ENCODE measurements at regions of chr7 and their contacts with region 1.

Region 1: DNA sequence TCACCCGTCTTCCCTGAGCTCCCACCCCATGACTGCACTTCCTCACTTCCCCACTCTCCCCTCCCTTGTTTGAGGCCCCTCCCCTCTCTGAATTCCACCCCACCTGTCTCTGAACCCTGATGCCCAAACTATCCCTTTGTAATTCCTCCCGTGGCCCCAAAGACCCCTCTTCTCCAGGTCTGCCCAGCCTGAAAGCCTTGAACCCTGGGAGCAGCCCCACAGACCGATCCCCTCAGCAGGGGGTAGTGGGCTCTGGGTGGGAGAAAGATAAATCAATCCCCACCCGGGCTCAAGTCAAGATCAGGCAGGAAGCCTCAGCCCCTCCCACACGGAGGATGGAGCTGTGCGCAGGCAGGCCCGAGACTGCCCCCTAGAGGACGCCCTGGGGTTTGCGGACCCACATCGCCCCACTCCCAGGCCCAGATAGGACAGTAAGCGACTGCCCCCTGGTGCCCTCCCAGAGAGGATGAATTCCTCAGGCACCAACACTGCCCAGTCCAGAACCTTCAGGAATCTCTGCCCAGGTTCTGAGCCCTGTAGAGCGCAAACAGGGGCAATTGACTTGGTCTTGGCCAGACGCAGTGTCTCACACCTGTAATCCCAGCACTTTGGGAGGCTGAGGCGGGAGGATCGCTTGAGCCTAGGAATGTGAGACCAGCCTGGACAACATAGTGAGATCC is 11.7 kb downstream of the HSPB1 start:
- DNase-seq: peak; percentile 90 to 97 (median 93)
- ATAC-seq: peak; percentile 85
- H3K4me3 ChIP-seq: no peak overlapping the region
- H3K4me3 Mint-ChIP-seq: peak overlapping the region in 4 of 10 donors; percentile 33 to 70 (median 60)
- H3K27ac ChIP-seq: no peak overlapping the region
- H3K27ac Mint-ChIP-seq: peak overlapping the region in 3 of 9 donors; percentile 8 to 86 (median 64)
- H3K4me1 ChIP-seq: peaks cover 11 to 12% of the 10 kb centered on the region in 2 donors
- H3K4me1 Mint-ChIP-seq: peaks cover 13 to 27% (median 23%) of the 10 kb centered on the region in 7 donors
- H3K27me3 ChIP-seq: no peaks in the 10 kb centered on the region
- H3K27me3 Mint-ChIP-seq: no peaks in the 10 kb centered on the region

Region 2: GRCh38 chr7:75914730-75915585 is 399.2 kb before region 1 on chr7 and contains the start of gene POR:
- CTCF ChIA-PET with region 1: no interaction called
- POLR2A ChIA-PET with region 1: no interaction called
- intact Hi-C with region 1: loop called (anchors 10 kb)
- DNase-seq: peak; percentile 93 to 100 (median 99)
- ATAC-seq: peak; percentile 99
- H3K4me3 ChIP-seq: peak within 1 kb of the TSS; percentile 79
- H3K4me3 Mint-ChIP-seq: peak within 1 kb of the TSS; percentile 91 to 94 (median 92)
- H3K27ac ChIP-seq: peak within 1 kb of the TSS; percentile 100
- H3K27ac Mint-ChIP-seq: peak within 1 kb of the TSS; percentile 94 to 99 (median 98)
- H3K4me1 ChIP-seq: peaks cover 12 to 19% of the 10 kb centered on the region in 2 donors
- H3K4me1 Mint-ChIP-seq: peaks cover 18 to 50% (median 35%) of the 10 kb centered on the region in 7 donors
- H3K27me3 ChIP-seq: no peaks in the 10 kb centered on the region
- H3K27me3 Mint-ChIP-seq: peaks cover 0 to 3% (median 0%) of the 10 kb centered on the region in 5 donors
- total RNA-seq, gene POR: 45.9 to 72.3 (median 69.7) TPM

Region 3: DNA sequence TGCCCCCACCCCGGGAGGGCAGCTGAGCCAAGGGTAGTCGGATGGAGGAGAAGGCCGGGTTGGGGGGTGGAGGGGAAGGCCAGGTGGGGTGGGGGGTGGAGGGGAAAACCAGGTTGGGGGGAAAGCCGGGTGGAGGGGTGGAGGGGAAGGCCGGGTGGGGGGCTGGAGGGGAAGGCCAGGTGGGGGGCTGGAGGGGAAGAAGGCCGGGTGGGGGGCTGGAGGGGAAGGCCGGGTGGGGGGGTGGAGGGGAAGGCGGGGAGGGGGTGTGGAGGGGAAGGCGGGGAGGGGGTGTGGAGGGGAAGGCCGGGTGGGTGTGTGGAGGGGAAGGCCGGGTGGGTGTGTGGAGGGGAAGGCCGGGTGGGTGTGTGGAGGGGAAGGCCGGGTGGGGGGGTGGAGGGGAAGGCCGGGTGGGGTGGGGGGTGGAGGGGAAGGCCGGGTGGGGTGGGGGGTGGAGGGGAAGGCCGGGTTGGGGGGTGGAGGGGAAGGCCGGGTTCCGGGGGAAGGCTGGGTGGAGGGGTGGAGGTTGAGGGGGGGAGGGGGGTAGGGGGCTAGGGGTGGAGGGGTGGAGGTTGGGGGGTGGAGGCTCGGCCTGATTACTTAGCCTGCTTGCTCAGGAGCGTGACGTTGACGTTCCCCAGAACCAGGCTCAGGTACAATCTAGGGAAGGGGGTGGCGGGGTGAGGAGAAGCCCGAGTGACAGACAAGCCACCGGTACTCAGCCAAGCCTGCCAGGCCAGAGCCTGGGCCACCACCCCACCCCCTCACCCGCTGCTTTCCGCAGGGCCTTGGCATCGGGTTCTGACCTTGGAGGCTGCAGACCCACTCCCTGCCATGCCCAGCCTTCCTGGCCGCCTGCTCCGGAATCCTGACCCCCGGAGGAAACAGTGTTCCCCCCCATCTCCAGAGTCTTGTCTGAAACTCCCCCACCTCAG is 325.3 kb before region 1 on chr7:
- CTCF ChIA-PET with region 1: no interaction called
- POLR2A ChIA-PET with region 1: no interaction called
- intact Hi-C with region 1: no loop called
- DNase-seq: no peak
- ATAC-seq: no peak
- H3K4me3 ChIP-seq: no peak overlapping the region
- H3K4me3 Mint-ChIP-seq: no peak overlapping the region
- H3K27ac ChIP-seq: no peak overlapping the region
- H3K27ac Mint-ChIP-seq: peak overlapping the region in 1 of 9 donors; percentile 3
- H3K4me1 ChIP-seq: peaks cover 0 to 4% of the 10 kb centered on the region in 2 donors
- H3K4me1 Mint-ChIP-seq: peaks cover 11 to 27% (median 16%) of the 10 kb centered on the region in 7 donors
- H3K27me3 ChIP-seq: no peaks in the 10 kb centered on the region
- H3K27me3 Mint-ChIP-seq: no peaks in the 10 kb centered on the region

Region 4: DNA sequence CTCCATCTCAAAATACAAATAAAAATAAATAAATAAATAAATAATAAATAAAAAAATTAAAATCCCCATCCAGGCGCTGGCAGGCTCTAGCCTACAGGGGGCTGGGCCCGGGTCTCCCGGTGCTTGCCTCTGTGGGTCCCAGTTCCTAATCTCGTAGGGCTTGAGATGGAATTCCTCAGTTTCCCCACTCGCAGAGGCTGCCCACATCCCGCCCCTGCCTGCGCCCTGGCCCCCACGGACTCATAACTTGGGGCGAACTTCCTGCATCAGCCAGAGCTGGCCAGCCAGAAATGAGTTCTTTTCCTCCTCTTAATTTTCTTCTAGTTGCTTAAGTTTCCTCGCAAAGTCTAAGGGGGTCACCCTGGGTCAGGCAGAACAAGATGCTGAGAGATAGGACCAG is 134.5 kb before region 1 on chr7:
- CTCF ChIA-PET with region 1: interaction called, 45 read pairs
- POLR2A ChIA-PET with region 1: interaction called, 10 read pairs
- intact Hi-C with region 1: loop called (anchors 1 kb)
- DNase-seq: no peak
- ATAC-seq: no peak
- H3K4me3 ChIP-seq: no peak overlapping the region
- H3K4me3 Mint-ChIP-seq: no peak overlapping the region
- H3K27ac ChIP-seq: no peak overlapping the region
- H3K27ac Mint-ChIP-seq: no peak overlapping the region
- H3K4me1 ChIP-seq: no peaks in the 10 kb centered on the region
- H3K4me1 Mint-ChIP-seq: peaks cover 2 to 7% (median 4%) of the 10 kb centered on the region in 7 donors
- H3K27me3 ChIP-seq: no peaks in the 10 kb centered on the region
- H3K27me3 Mint-ChIP-seq: peaks cover 0 to 2% (median 0%) of the 10 kb centered on the region in 5 donors

Region 5: DNA sequence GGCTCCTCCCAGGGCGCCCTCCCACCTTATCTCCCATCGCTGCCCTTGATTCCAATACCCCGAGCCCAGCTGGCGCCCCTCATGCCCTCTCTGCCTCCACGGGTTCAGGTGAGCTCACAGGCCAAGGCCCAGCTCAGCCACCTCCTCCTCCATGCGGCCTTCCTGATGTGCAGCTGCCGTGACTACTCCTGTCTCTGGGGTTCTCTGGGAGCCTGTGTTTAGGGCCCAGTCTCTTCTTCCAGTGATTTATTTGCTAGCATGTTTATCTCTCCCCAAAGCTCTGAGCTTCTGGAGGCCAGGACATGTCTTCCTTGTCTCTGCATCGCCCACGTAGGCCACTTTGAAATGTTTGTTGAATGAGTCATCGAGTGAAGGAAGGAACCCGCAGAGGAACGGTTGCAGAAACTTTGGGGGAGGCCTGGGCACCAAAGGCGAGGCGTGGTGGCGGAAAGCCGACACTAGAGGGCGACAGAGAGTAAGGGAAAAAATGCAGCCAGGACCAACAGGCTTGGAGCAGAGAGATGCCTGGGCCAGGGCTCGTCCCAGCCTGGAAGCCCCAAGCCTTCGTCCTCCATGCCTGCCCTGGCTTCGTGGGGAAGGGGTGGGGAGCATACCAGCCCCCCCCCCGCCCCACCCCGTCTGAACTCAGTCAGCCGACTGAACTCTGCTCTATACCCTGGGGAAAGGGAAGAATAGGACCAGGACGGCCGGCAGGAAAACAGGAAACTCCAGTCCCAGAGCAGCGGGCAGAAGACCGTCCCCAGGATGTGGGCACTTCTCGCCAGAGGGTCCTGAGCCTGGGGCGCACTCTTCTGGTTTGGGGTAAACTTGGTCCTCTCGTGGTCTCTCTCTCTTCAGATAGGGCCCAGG is 22.6 kb before region 1 on chr7:
- CTCF ChIA-PET with region 1: interaction called, 79 read pairs
- POLR2A ChIA-PET with region 1: interaction called, 8 read pairs
- intact Hi-C with region 1: loop called (anchors 1 kb)
- DNase-seq: peak; percentile 59 to 93 (median 75)
- ATAC-seq: peak; percentile 89
- H3K4me3 ChIP-seq: no peak overlapping the region
- H3K4me3 Mint-ChIP-seq: peak overlapping the region in 1 of 10 donors; percentile 38
- H3K27ac ChIP-seq: no peak overlapping the region
- H3K27ac Mint-ChIP-seq: peak overlapping the region in 4 of 9 donors; percentile 32 to 82 (median 72)
- H3K4me1 ChIP-seq: no peaks in the 10 kb centered on the region
- H3K4me1 Mint-ChIP-seq: peaks cover 0 to 20% (median 5%) of the 10 kb centered on the region in 7 donors
- H3K27me3 ChIP-seq: no peaks in the 10 kb centered on the region
- H3K27me3 Mint-ChIP-seq: peaks cover 0 to 6% (median 0%) of the 10 kb centered on the region in 5 donors

Region 6: DNA sequence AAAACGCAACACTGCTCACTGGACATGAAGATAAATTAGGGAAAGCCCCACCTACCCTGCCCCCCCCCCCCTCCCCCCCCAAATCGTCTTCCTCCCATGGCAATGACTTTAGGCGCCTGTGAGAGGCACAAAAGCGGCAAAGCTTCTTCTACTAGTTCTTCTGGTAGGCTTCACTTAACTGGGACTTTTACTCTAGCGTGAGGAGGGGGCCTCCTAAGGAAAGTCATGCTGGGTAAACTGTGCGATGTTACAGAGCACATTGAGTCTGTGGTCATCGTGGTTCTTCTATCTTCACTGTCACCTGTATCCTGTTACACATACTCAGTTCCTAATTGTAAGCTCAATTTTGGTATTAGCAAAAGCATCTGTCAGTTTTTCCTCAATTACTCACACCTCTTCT is 13.4 kb after region 1 on chr7:
- CTCF ChIA-PET with region 1: interaction called, 8 read pairs
- POLR2A ChIA-PET with region 1: interaction called, 15 read pairs
- intact Hi-C with region 1: no loop called
- DNase-seq: no peak
- ATAC-seq: peak; percentile 68
- H3K4me3 ChIP-seq: no peak overlapping the region
- H3K4me3 Mint-ChIP-seq: no peak overlapping the region
- H3K27ac ChIP-seq: no peak overlapping the region
- H3K27ac Mint-ChIP-seq: peak overlapping the region in 5 of 9 donors; percentile 25 to 81 (median 46)
- H3K4me1 ChIP-seq: no peaks in the 10 kb centered on the region
- H3K4me1 Mint-ChIP-seq: peaks cover 22 to 51% (median 40%) of the 10 kb centered on the region in 7 donors
- H3K27me3 ChIP-seq: no peaks in the 10 kb centered on the region
- H3K27me3 Mint-ChIP-seq: no peaks in the 10 kb centered on the region

Region 7: DNA sequence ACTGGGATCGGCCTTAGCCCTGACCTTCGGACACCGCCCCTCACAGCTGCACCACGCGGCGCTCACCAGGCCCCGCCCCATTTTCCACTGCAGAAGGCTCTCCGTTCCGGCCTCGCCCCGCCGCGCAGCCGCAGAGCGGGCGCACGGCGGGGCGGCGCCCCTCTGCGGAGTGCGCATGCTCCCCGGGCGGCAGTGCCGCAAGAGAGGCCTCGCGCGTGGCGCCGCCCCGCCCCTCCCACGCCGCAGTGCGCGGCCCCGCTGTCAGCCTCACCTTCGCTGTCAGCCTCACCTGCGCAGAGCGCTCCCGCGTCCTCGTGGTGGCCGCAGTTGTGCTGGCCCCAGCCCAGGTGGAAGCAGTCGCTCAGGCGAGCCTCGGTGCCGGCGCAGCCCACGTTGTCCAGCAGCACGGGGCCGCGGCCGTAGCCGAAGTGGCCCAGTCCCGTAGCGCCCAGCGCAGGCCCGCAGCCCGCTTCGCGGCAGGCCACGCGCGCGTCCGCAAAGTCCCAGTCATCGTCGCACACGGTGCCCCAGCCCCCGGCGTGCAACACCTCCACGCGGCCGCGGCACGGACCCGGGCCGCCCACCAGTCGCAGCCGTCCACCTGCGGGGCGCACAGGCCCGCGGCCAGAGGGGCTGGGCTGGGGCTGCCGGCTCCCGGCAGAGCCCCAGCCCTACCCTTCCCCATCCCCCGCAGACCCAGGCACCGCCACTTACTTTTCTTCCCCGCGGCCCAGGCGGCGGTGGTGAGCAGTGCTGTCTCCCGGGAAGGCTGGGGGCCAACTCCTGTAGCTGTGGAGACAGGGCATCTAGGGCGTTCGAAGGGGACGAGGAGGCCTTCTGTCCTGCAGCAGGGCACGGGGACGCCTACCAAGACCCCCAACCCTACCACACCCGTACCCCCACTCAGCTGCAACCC is 79.2 kb after region 1 on chr7:
- CTCF ChIA-PET with region 1: no interaction called
- POLR2A ChIA-PET with region 1: interaction called, 7 read pairs
- intact Hi-C with region 1: loop called (anchors 1 kb)
- DNase-seq: peak; percentile 86 to 96 (median 92)
- ATAC-seq: peak; percentile 89
- H3K4me3 ChIP-seq: peak overlapping the region; percentile 84
- H3K4me3 Mint-ChIP-seq: peak overlapping the region; percentile 78 to 93 (median 90)
- H3K27ac ChIP-seq: peak overlapping the region; percentile 74
- H3K27ac Mint-ChIP-seq: peak overlapping the region; percentile 86 to 97 (median 95)
- H3K4me1 ChIP-seq: peaks cover 14 to 20% of the 10 kb centered on the region in 2 donors
- H3K4me1 Mint-ChIP-seq: peaks cover 8 to 29% (median 23%) of the 10 kb centered on the region in 7 donors
- H3K27me3 ChIP-seq: no peaks in the 10 kb centered on the region
- H3K27me3 Mint-ChIP-seq: no peaks in the 10 kb centered on the region